RWPE1 (cell line): ENCODE measurements at regions of chr19 and their contacts with region 1.

Region 1: DNA sequence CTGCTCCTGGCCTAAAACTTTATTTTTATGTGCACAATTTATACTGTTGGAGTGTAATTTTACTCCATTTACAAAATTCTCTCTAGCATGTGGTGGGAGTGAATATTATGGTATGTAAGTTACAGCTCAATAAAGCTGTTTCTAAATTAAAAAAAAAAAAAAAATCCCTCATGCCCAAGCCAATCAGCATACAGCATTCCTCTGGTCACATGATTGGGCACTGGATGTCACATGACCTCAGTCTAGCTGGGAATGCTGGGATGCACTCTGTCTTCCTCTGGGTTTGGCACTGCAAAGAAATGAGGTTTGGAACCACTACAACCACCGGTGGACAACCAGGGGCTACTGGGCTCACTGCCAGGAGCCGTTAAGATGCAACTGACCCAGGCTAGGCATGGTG is 67.6 kb downstream of the ZNF557 start:
- DNase-seq: no peak
- H3K27ac ChIP-seq: no peak overlapping the region
- CTCF ChIP-seq: no peak

Region 2: DNA sequence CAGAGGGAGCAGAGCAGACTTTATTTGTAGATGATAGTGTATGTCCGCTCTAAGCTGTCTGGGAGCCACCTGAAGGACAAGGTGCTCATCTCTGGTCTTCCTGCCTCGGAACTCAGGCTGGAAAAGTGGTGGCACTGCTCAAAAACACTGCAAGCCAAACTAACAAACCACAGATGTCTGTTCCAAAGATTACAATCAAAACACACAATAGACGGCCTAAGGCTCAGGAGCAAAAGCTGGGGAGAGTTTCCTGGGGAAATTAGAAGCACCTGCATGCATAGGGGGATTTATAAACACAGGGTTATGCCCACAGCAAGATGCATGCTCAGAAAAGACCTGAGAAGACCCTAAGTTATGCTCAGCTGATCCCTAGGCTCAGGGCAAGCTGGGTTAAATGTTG is 683.5 kb after region 1 on chr19:
- CTCF ChIA-PET with region 1: no interaction called
- POLR2A ChIA-PET with region 1: interaction called, 18 read pairs
- DNase-seq: no peak
- H3K27ac ChIP-seq: no peak overlapping the region
- CTCF ChIP-seq: no peak